Panc1 (cell line): ENCODE measurements at regions of chr3 and their contacts with region 1.

Region 1: GRCh38 chr3:192444096-192444790 is 283.1 kb downstream of the FGF12 start:
- DNase-seq: peak; percentile 51
- ATAC-seq: peak; percentile 94
- H3K4me3 ChIP-seq: no peak overlapping the region
- H3K27ac ChIP-seq: no peak overlapping the region
- H3K4me1 ChIP-seq: no peaks in the 10 kb centered on the region
- H3K27me3 ChIP-seq: peaks cover 18% of the 10 kb centered on the region
- CTCF ChIP-seq: peak; percentile 99

Region 2: GRCh38 chr3:192082730-192083660 is 361.2 kb before region 1 on chr3:
- CTCF ChIA-PET with region 1: no interaction called
- POLR2A ChIA-PET with region 1: no interaction called
- in situ Hi-C with region 1: no loop called
- intact Hi-C with region 1: no loop called
- DNase-seq: no peak
- ATAC-seq: no peak
- H3K4me3 ChIP-seq: no peak overlapping the region
- H3K27ac ChIP-seq: no peak overlapping the region
- H3K4me1 ChIP-seq: no peaks in the 10 kb centered on the region
- H3K27me3 ChIP-seq: no peaks in the 10 kb centered on the region
- CTCF ChIP-seq: no peak

Region 3: GRCh38 chr3:192130534-192131132 is 313.6 kb before region 1 on chr3:
- CTCF ChIA-PET with region 1: no interaction called
- POLR2A ChIA-PET with region 1: no interaction called
- in situ Hi-C with region 1: no loop called
- intact Hi-C with region 1: loop called (anchors 10 kb)
- DNase-seq: peak; percentile 8
- ATAC-seq: peak; percentile 80; the same call in 1 of the 2 replicates
- H3K4me3 ChIP-seq: no peak overlapping the region
- H3K27ac ChIP-seq: no peak overlapping the region
- H3K4me1 ChIP-seq: no peaks in the 10 kb centered on the region
- H3K27me3 ChIP-seq: no peaks in the 10 kb centered on the region
- CTCF ChIP-seq: peak; percentile 76

Region 4: GRCh38 chr3:192188218-192188835 is 255.9 kb before region 1 on chr3:
- CTCF ChIA-PET with region 1: interaction called, 3 read pairs
- POLR2A ChIA-PET with region 1: no interaction called
- in situ Hi-C with region 1: no loop called
- intact Hi-C with region 1: loop called (anchors 1 kb)
- DNase-seq: peak; percentile 20
- ATAC-seq: peak; percentile 82
- H3K4me3 ChIP-seq: no peak overlapping the region
- H3K27ac ChIP-seq: no peak overlapping the region
- H3K4me1 ChIP-seq: no peaks in the 10 kb centered on the region
- H3K27me3 ChIP-seq: no peaks in the 10 kb centered on the region
- CTCF ChIP-seq: peak; percentile 82

Region 5: DNA sequence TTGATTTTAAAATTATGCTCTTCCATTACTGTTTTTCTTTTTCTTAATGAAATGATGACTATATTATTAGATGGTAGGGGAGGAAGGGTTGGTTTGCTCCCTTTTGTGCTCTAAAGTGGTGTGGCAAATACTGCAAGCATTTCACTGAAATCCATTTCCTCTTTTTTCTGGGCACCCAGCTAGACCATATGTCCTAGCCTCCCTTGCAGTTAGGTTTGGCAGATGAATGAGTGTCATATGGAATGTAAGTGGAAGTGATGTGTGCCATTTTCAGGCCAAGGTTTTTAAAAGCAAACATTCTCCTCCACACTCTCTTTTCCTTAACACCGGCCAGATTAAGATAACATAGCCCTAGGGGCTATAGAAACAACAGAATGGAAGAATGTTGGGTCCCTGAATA is 79.9 kb before region 1 on chr3:
- CTCF ChIA-PET with region 1: no interaction called
- POLR2A ChIA-PET with region 1: no interaction called
- in situ Hi-C with region 1: no loop called
- intact Hi-C with region 1: no loop called
- DNase-seq: no peak
- ATAC-seq: no peak
- H3K4me3 ChIP-seq: no peak overlapping the region
- H3K27ac ChIP-seq: no peak overlapping the region
- H3K4me1 ChIP-seq: no peaks in the 10 kb centered on the region
- H3K27me3 ChIP-seq: no peaks in the 10 kb centered on the region
- CTCF ChIP-seq: no peak